ENCODE measurements at regions of chr17 and their contacts with region 1.

Region 1: GRCh38 chr17:42438600-42439567 is 15.8 kb upstream of the CAVIN1 start:
- DNase-seq: peak; percentile 70
- ATAC-seq: peak; percentile 61
- H3K4me3 Mint-ChIP-seq: no peak overlapping the region
- H3K27ac Mint-ChIP-seq: no peak overlapping the region
- H3K4me1 Mint-ChIP-seq: peaks cover 8% of the 10 kb centered on the region
- H3K27me3 Mint-ChIP-seq: peaks cover 2% of the 10 kb centered on the region

Region 2: GRCh38 chr17:42428141-42428944 is 10.5 kb before region 1 on chr17:
- CTCF ChIA-PET with region 1: interaction called, 15 read pairs
- POLR2A ChIA-PET with region 1: interaction called, 3 read pairs
- intact Hi-C with region 1: no loop called
- DNase-seq: peak; percentile 58
- ATAC-seq: peak; percentile 81
- H3K4me3 Mint-ChIP-seq: no peak overlapping the region
- H3K27ac Mint-ChIP-seq: no peak overlapping the region
- H3K4me1 Mint-ChIP-seq: no peaks in the 10 kb centered on the region
- H3K27me3 Mint-ChIP-seq: peaks cover 14% of the 10 kb centered on the region

Region 3: GRCh38 chr17:42493319-42493718 is 54.4 kb after region 1 on chr17:
- CTCF ChIA-PET with region 1: interaction called, 18 read pairs
- POLR2A ChIA-PET with region 1: no interaction called
- intact Hi-C with region 1: no loop called
- DNase-seq: no peak
- ATAC-seq: no peak
- H3K4me3 Mint-ChIP-seq: no peak overlapping the region
- H3K27ac Mint-ChIP-seq: no peak overlapping the region
- H3K4me1 Mint-ChIP-seq: peaks cover 2% of the 10 kb centered on the region
- H3K27me3 Mint-ChIP-seq: no peaks in the 10 kb centered on the region

Measured in activated CD4-positive, alpha-beta T cell treated with anti-CD3 and anti-CD28 coated beads for 36 hours (primary cell).